ENCODE measurements at regions of chr3 and their contacts with region 1.

Region 1: DNA sequence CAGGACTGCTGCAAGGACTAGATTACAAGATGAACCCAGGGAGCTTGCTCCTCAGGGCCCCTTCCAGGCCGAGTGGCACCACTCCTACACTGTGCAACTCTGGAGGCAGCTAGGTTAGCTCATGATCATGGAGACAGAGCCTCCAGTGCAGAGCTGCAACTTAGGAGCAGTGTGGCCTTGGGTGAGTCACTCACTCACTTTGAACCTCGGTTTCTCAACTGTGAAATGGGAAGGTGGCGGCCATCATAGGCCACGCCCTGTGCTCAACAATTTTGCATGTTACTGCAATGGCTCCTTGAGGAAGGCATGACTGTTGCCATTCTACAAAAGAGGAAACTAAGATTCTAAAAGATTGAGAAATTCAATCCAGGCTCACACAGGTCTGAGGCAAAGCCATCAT is 11.2 kb upstream of the CXCR6 start:
- DNase-seq: no peak
- H3K4me3 ChIP-seq: no peak overlapping the region
- H3K27ac ChIP-seq: no peak overlapping the region
- H3K4me1 ChIP-seq: no peaks in the 10 kb centered on the region
- H3K27me3 ChIP-seq: no peaks in the 10 kb centered on the region
- CTCF ChIP-seq: no peak
- POLR2A ChIP-seq: no peak

Region 2: DNA sequence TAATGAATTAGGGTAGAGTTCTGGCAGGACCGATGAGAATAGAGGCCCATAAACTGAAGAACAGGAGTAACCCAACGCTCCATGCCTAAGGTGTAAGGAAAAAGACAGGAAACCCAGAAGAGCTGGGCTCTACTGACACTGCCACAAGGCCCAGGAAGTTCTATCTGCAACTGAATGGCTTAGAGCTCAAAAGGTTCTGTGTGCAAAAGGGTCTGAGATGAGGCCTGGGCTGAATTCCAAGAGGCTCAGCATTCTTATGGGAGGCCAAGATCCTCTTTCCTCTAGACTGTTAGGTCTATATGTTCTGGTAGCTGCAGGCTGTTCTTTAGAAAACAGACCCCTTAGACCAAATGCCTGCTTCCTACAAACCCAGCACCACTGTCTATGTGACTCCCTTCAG is 816.1 kb after region 1 on chr3:
- intact Hi-C with region 1: loop called (anchors 5 kb)
- DNase-seq: no peak
- H3K4me3 ChIP-seq: no peak overlapping the region
- H3K27ac ChIP-seq: no peak overlapping the region
- H3K4me1 ChIP-seq: no peaks in the 10 kb centered on the region
- H3K27me3 ChIP-seq: no peaks in the 10 kb centered on the region
- CTCF ChIP-seq: no peak
- POLR2A ChIP-seq: no peak

Region 3: DNA sequence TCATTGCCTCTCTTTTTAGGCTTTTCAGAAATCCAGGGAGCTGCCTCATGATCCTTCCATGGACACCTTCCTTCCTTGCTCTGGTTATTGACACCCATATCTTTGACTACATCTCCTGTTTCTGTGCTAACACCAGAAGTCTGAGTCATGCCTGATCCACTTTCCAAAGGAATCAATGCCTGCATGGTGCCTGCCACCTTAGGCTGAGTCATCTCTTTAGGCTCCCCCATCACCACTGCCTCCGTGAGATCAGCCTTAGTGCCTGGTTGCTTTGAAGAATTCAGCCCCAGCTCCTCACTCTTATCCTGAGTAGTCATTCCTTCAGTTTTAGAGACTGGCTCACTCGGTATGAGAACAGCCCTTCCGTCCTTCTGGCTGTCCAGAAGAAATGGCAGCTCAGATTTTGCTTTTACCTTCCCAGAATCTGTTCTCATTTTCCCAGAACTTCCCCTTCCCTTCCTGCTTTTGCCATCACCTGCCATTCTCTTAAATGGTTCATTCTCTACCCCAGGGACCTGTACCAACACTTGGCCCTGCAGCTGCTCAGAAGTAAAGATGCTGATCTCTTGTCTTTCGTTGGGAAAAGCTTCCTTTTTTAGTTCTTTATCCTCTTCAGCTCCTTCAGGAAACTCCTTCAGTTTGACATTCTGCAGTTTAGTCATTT is 1978.8 kb after region 1 on chr3:
- intact Hi-C with region 1: no loop called
- DNase-seq: no peak
- H3K4me3 ChIP-seq: no peak overlapping the region
- H3K27ac ChIP-seq: no peak overlapping the region
- H3K4me1 ChIP-seq: no peaks in the 10 kb centered on the region
- H3K27me3 ChIP-seq: no peaks in the 10 kb centered on the region
- CTCF ChIP-seq: no peak
- POLR2A ChIP-seq: no peak